ENCODE measurements at regions of chr15 and their contacts with region 1.

Region 1: DNA sequence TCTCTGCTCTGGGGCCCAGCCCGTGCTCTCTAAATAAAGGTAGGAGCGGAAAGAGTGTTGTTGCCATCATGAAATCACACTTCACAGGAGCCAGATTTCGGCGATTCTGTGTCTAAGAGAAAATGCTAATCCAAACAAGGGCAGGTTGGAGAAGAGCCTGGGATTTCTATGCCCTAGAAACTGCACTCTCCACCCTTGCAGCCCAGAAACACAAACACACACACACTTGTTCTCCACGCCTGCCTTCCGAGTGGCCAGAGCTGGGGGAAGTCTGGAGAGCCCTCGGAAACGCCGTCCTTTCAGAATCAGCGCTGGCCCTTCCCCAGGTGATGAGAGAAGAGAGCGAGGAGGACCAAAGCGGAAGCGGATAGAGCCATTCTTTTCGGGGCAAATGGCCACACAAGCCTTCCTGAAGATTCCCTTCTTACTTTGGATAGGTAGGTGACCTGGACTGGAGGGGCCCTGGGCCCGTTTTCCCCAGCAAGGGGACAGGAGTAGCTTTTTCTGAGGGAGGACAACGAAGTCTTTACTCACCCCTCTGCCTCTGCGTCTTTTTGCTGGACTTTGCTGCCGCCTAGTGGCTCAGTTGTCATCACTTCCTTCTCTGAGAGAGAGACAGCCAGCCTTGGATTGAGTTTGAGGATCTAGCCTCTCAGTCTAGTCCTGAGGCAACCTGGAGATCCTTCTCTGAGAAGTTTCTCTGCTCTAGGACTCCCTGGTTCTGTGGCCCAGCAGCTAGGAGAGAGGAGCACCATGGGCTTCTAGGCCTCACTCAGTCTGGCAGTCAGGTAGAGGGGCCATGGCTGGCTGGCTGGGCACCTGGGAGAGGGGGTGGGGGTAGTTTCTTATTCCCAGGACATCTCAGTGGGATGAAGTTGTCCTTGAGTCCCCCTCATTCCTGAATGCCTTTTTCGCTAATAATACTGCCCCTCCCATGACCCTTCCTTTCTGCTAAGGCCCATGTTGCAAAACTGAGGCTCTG is 37.7 kb downstream of the SENP8 start:
- DNase-seq: peak; percentile 95

Region 2: DNA sequence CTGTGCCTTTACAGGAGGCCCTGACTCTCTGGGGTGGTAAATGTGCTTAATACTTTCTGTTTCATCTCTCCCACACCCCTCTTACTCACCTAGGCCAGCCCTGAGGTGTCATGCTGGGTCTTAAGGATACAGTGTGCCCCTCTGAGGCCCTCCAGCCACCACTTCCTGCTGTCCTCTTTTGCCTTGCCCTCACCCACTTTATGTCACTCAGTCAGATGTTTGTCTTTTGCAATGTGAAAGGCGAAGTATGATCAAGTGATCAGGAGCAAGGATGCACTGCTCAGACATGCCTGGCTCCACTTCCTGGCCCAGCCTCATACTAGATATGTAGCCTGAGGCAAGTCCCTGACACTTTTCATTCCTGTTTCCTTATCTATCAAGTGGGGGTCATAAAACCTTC is 684.6 kb before region 1 on chr15:
- in situ Hi-C with region 1: loop called (anchors 25 kb)
- DNase-seq: no peak

Region 3: GRCh38 chr15:71800835-71801745 is 354.8 kb before region 1 on chr15:
- in situ Hi-C with region 1: loop called (anchors 10 kb)
- DNase-seq: peak; percentile 89

Region 4: GRCh38 chr15:72770673-72771328 is 614.9 kb after region 1 on chr15:
- in situ Hi-C with region 1: no loop called
- DNase-seq: no peak

Region 5: DNA sequence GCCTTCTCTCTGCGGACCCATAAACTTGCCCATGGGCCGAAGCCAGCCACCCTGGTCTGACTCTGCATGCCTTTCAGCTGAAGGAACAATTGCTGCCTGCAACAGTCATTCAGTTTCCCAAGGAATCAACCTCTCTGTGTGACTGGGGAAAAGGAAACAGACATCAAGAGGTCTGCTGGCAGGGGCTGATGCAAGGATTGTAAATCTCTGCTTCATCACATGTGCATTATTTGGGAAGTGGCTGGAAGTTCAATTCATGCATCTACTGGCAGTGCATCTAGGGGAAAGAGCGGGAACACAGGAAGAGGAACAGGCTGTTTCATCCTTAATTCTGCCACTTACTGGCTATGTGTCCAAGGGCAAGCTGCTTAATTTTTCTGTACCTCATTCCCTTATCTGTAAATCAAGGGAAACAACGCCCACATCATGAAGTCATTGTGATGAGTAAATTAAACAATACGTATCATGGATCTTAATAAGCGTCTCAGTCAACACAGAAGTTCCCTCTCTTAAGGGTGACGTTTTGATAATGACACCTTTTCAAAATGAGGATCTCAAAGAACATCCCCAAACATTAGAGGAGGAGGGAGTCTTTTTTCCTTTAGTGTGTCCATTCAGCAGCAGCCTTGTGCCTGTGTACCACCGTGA is 645.0 kb after region 1 on chr15:
- in situ Hi-C with region 1: no loop called
- DNase-seq: no peak

Measured in KBM-7 (cell line).